AG04449 (cell line): ENCODE measurements at regions of chr1 and their contacts with region 1.

Region 1: DNA sequence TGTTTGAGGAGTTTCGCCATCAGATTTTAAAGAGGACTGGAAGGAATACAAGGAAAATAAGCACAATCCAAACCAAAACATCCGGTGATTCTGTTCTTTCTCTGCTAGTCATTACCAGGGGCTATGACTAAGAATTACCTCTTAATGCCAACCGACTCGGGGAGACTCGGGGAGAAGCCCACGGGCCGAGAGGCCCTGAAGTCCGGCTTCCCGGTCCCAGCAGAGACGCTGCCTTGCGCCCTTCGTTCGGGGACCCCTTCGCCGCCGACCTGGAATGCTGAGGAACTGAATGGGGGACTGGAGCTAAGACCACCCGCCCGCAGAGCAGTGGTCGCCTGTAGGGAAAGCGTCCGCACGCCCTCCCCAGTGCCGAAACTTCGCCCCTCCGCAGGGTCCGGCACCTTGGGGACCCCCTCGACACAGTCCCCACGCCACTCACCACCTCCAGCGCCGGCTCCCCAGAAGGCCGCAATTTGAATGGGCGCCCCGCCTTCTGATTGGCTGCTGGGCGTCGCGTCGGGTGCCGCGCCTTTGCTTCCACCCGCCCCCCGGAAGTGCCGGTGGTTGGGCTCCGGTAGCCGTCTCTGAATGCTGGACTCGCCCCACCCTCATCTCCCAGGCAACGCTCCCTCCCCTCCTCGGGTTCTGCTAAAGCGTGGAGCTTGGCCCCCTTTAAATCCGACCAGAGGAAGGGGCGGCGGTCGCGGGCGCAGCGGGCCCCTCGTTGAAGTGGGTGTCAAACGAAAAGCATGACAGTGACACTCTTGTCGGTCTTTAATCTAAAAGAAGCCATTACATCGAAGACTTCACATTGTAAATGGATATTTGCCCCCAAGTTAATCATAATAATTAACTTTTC is at the start of gene KIF14:
- DNase-seq: no peak
- H3K4me3 ChIP-seq: peak within 1 kb of the TSS; percentile 88
- CTCF ChIP-seq: no peak

Region 2: DNA sequence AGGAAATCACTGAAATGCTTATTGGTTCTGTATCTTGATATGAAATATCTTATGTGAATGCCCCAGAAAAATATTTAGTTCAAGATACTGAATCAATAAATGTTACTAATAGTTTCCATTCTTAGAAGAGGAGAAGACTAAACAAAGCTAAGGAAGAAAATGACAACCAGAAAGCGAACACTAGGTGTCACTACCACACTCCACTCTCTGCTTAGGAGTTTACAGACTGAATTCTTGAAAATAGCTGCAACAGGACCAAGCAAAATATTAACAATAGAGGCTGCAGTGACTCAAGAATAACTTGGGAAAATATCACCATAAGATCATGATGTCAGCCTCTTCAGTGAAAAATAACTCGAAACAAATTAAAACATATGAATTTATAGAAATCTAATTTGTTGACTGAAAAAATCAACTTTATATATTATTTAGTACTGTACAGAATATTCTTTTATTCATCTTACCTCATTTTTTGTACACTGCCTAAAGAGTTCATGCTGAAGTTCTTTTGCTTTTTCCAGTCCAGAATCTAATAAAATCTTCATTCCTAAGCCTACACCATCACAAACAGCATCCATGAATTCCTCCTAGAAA is 61.5 kb before region 1 on chr1:
- CTCF ChIA-PET with region 1: interaction called, 10 read pairs
- POLR2A ChIA-PET with region 1: no interaction called
- DNase-seq: peak; percentile 21
- H3K4me3 ChIP-seq: no peak overlapping the region
- CTCF ChIP-seq: peak; percentile 62

Region 3: DNA sequence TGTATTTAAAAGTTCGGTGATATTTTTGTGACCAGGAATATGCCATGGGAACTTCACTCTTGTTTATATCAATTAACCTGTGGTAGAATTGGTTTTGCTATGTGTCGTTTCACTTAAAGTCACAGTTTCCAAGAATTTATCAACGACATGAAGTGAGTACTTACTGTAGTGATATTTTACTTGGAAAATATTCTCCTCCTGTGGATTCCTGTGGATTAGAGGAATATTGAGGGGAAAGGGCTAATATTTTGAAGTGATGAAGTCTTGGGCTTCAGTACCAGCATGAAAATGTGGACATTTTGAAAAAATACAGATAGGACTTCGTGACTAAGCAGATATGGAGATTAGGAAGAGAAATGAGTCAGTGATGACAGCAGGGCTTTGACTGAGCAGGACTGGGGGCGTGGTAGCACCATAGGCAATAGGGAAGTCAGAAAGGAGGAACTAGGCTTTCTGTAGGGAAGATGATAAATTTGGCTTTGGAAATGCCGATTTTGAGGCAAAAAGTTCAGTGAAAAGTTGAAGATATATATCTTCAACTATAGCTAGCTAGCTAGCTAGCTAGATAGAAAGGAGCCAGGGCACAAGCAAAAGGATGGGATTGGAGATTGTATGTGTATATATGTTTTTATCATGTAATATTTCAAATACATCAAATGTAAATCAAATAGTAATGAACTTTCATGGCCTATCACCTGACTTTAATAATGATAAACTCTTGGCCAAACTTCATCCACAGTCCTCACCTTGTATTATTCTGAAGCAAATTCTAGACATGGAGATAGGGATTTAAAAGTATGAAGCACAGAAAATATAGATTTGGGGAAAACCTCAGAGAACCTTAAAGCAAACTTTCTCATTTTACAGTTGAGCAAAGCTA is 19.5 kb after region 1 on chr1:
- CTCF ChIA-PET with region 1: interaction called, 52 read pairs
- POLR2A ChIA-PET with region 1: no interaction called
- DNase-seq: peak; percentile 51
- H3K4me3 ChIP-seq: no peak overlapping the region
- CTCF ChIP-seq: no peak

Region 4: DNA sequence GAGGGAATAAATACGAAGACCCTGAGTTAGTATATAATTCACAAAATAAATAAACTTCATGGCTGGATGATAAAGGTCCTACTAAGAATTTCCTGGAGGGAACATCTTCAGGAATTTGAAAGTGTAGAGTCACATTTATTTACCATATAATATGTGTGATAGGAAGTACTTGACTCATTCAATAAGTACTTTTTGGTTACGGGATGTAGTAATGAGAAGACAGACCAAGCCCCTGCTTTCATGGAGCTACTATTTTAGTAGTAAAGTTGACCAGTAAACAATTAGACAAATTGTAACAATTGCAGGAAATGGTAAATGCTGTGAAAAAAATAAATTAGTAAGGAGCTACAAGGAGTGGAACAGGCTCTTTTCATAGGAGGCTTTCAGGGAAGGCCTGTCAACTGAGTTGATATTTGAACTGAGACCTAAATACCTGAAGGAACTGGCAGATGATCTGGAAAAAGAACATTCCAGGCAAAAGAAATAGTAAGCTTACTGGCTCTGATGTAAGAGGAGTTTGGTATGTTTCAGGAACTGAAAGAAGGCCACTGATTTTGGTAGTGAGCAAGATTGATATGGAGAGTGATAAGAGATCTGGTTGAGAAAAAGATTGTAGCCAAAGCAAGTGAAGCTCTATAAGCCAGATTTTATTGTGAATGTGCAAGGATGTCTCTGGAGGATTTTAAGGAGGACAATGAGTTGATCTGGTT is 154.4 kb after region 1 on chr1:
- CTCF ChIA-PET with region 1: interaction called, 13 read pairs
- POLR2A ChIA-PET with region 1: no interaction called
- DNase-seq: no peak
- H3K4me3 ChIP-seq: no peak overlapping the region
- CTCF ChIP-seq: no peak

Region 5: GRCh38 chr1:200802865-200803512 is 182.5 kb after region 1 on chr1:
- CTCF ChIA-PET with region 1: interaction called, 167 read pairs
- POLR2A ChIA-PET with region 1: no interaction called
- DNase-seq: peak; percentile 38
- H3K4me3 ChIP-seq: no peak overlapping the region
- CTCF ChIP-seq: peak; percentile 92

Region 6: GRCh38 chr1:200837931-200838571 is 217.5 kb after region 1 on chr1:
- CTCF ChIA-PET with region 1: interaction called, 66 read pairs
- POLR2A ChIA-PET with region 1: no interaction called
- DNase-seq: no peak
- H3K4me3 ChIP-seq: no peak overlapping the region
- CTCF ChIP-seq: no peak

Region 7: GRCh38 chr1:201042779-201043461 is 422.4 kb after region 1 on chr1:
- CTCF ChIA-PET with region 1: interaction called, 13 read pairs
- POLR2A ChIA-PET with region 1: no interaction called
- DNase-seq: peak; percentile 23
- H3K4me3 ChIP-seq: no peak overlapping the region
- CTCF ChIP-seq: peak; percentile 84